Colonic mucosa (tissue), 4 donors: ENCODE measurements at regions of chr19 and their contacts with region 1.

Region 1: GRCh38 chr19:52942386-52943133 is 19.3 kb upstream of the ZNF888 start:
- DNase-seq: peak; percentile 98
- H3K4me3 ChIP-seq: peak overlapping the region; percentile 59
- H3K27ac ChIP-seq: peak overlapping the region; percentile 74
- H3K4me1 ChIP-seq: peaks cover 5% of the 10 kb centered on the region
- H3K27me3 ChIP-seq: no peaks in the 10 kb centered on the region
- CTCF ChIP-seq: no peak

Region 2: GRCh38 chr19:52961981-52962380 is 19.4 kb after region 1 on chr19:
- intact Hi-C with region 1: loop called (anchors 2 kb)
- DNase-seq: no peak
- H3K4me3 ChIP-seq: peak overlapping the region; percentile 59
- H3K27ac ChIP-seq: peak overlapping the region; percentile 54
- H3K4me1 ChIP-seq: no peaks in the 10 kb centered on the region
- H3K27me3 ChIP-seq: no peaks in the 10 kb centered on the region
- CTCF ChIP-seq: no peak

Region 3: DNA sequence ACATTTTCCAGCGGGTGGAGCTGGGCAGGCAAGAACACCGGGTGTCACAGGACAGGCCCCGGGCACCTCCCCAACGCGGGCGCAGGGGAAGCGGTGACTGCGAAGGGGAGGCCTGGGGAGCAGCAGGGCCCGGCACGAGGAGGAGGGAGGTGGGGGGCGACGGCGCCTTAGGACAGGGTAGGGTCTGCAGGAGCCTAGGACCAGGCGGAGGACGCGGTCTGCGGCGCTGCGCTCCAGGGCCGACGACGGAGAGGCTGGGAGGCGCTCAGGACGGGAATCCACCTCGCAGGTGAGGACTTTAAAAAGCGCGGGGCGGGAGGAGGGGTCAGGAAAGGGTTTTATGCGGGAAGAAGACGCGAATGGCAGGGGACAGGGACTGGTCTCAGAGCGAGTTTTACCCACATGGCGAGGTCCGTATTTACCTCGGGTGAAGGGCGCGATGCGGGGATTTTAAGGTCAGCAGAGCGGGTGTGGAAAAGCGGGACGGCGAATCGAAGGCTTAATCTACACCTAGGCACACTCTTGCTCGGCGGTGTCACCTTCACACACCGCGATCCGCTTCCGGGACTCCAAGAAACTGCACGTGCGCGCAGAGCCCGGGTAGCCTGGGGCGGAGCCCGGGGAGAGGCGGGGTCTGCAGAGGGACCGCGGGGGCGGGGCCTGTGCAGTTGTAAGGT is 115.5 kb after region 1 on chr19:
- intact Hi-C with region 1: no loop called
- DNase-seq: no peak
- H3K4me3 ChIP-seq: no peak overlapping the region
- H3K27ac ChIP-seq: no peak overlapping the region
- H3K4me1 ChIP-seq: no peaks in the 10 kb centered on the region
- H3K27me3 ChIP-seq: no peaks in the 10 kb centered on the region
- CTCF ChIP-seq: no peak